K562 (cell line): ENCODE measurements at regions of chr18 and their contacts with region 1.

Region 1: GRCh38 chr18:39421276-39421675 is 1855.7 kb upstream of the CELF4 start:
- DNase-seq: no peak
- ATAC-seq: no peak
- H3K4me3 ChIP-seq: no peak overlapping the region
- H3K27ac ChIP-seq: no peak overlapping the region
- H3K4me1 ChIP-seq: no peaks in the 10 kb centered on the region
- H3K27me3 ChIP-seq: no peaks in the 10 kb centered on the region
- CTCF ChIP-seq: no peak
- EP300 ChIP-seq: no peak
- POLR2A ChIP-seq: no peak
- RAD21 ChIP-seq: no peak

Region 2: GRCh38 chr18:39635966-39636365 is 214.7 kb after region 1 on chr18:
- CTCF ChIA-PET with region 1: no interaction called
- POLR2A ChIA-PET with region 1: no interaction called
- in situ Hi-C with region 1: loop called (anchors 10 kb)
- intact Hi-C with region 1: no loop called
- DNase-seq: no peak
- ATAC-seq: no peak
- H3K4me3 ChIP-seq: no peak overlapping the region
- H3K27ac ChIP-seq: no peak overlapping the region
- H3K4me1 ChIP-seq: no peaks in the 10 kb centered on the region
- H3K27me3 ChIP-seq: no peaks in the 10 kb centered on the region
- CTCF ChIP-seq: no peak
- EP300 ChIP-seq: no peak
- POLR2A ChIP-seq: no peak
- RAD21 ChIP-seq: no peak